ENCODE measurements at regions of chr19 and their contacts with region 1.

Region 1: GRCh38 chr19:7883796-7884570 is 4.3 kb upstream of the LRRC8E start:
- DNase-seq: peak; percentile 33
- ATAC-seq: no peak
- H3K4me3 ChIP-seq: no peak overlapping the region
- H3K27ac ChIP-seq: no peak overlapping the region
- H3K4me1 ChIP-seq: peaks cover 2% of the 10 kb centered on the region; the same call in 1 of the 2 replicates
- H3K27me3 ChIP-seq: no peaks in the 10 kb centered on the region
- CTCF ChIP-seq: no peak
- POLR2A ChIP-seq: no peak
- RAD21 ChIP-seq: no peak

Region 2: GRCh38 chr19:7522072-7522922 is 361.7 kb before region 1 on chr19 and contains the start of gene MCOLN1:
- CTCF ChIA-PET with region 1: no interaction called
- POLR2A ChIA-PET with region 1: interaction called, 12 read pairs
- dilution Hi-C with region 1: no loop called
- in situ Hi-C with region 1: no loop called
- intact Hi-C with region 1: no loop called
- DNase-seq: peak; percentile 94
- ATAC-seq: peak; percentile 97
- H3K4me3 ChIP-seq: peak within 1 kb of the TSS; percentile 59
- H3K27ac ChIP-seq: peak within 1 kb of the TSS; percentile 83
- H3K4me1 ChIP-seq: peaks cover 2% of the 10 kb centered on the region; the same call in 1 of the 2 replicates
- H3K27me3 ChIP-seq: no peaks in the 10 kb centered on the region
- CTCF ChIP-seq: no peak
- POLR2A ChIP-seq: no peak; the same call in 1 of the 2 replicates
- RAD21 ChIP-seq: no peak; the same call in 1 of the 2 replicates
- total RNA-seq, gene MCOLN1: 2.5 and 3.4 TPM in 2 replicates

Measured in IMR-90 (cell line).